Activated T-helper 2 cell treated with anti-CD3 and anti-CD28 coated beads, Interferon-gamma antibody, Interleukin-2, Interleukin-4, amounts not matched to agents 10 μg/mL and 5 μg/mL and 100 μg/mL, durations not matched to agents 14 hours and 24 hours and 36 hours (primary cell): ENCODE measurements at regions of chrX and their contacts with region 1.

Region 1: GRCh38 chrX:74614093-74614909 is at the start of gene RLIM:
- DNase-seq: peak; percentile 90
- H3K4me3 Mint-ChIP-seq: peak within 1 kb of the TSS; percentile 100
- H3K27ac Mint-ChIP-seq: peak within 1 kb of the TSS; percentile 100
- H3K4me1 Mint-ChIP-seq: peaks cover 9% of the 10 kb centered on the region
- H3K27me3 Mint-ChIP-seq: no peaks in the 10 kb centered on the region
- total RNA-seq, gene RLIM: 37.6 and 38.7 TPM in 2 replicates

Region 2: DNA sequence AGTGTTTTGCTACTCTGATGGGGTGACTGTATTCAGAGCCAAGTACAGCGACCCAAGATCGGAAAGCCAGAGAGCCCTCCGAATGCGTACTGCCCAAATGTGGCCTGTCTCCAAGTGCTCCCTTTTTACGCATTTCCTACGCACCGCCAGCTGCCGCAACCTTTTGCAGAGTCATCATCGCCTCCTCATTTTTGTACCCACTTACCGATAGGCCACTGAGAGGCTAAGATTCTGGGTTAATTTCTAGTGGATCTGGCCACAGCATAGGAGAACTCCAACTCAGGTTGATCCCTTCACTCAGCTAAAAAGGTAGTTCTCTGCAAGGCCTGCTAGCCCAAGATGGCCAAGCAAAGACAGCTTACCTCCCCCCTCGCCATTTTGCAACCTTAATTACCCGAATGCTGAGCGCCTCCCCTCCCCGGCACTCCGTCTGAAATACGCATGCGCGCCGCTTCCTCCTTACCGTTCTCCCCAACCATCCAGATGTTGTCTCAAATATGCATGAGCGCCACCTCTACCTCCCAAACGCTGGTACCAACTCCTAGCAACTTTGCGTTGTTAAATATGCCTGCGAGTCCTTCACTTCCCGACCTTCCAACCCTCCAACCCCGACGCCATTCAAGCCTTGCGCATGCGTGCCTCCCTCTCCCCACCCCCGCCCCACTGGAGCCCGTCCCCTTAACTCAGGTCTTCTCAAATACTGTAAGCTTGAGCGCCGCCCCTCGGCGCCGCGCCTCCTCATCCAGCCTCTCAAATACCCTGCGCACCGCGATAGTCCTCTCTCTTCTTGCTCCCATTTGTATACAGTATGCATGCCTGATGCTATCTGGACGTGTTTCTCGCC is 322.1 kb before region 1 on chrX:
- intact Hi-C with region 1: loop called (anchors 1 kb)
- DNase-seq: peak; percentile 68
- H3K4me3 Mint-ChIP-seq: peak overlapping the region; percentile 97
- H3K27ac Mint-ChIP-seq: peak overlapping the region; percentile 100
- H3K4me1 Mint-ChIP-seq: peaks cover 14% of the 10 kb centered on the region
- H3K27me3 Mint-ChIP-seq: no peaks in the 10 kb centered on the region

Region 3: DNA sequence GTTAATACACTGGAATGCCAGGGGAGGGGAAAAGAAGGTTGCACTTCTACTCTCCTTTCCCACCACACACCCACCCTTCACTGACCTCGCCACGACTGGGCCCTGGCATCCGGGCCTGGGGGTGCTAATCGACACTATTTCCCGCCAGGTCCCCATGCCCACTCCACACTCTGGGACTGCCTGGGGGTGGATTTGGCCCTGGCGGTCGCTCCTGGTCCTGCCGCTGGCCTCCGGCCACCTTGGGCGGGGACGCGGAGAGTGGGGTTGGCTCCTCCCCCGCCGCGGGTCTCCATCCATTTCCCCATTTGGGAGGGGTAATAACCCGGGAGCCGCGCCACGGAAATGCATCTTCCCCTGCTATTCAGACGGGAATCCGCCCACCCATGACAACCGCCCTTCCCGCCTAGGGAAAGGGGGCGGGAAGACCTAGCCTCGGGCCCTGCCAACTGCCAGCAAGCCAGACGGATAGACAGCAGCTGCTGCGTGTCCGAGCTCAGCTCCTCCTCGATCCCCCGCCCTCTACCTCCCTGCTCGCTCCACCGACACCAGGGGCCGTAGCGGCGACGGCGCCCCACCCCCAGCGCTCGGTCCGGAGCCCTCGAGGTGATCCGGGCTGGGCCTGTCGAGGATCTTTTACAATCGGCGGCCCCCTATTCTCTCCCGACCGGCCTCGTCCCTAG is 78.0 kb before region 1 on chrX:
- intact Hi-C with region 1: loop called (anchors 5 kb)
- DNase-seq: peak; percentile 9
- H3K4me3 Mint-ChIP-seq: peak overlapping the region; percentile 75
- H3K27ac Mint-ChIP-seq: peak overlapping the region; percentile 82
- H3K4me1 Mint-ChIP-seq: peaks cover 30% of the 10 kb centered on the region
- H3K27me3 Mint-ChIP-seq: no peaks in the 10 kb centered on the region

Region 4: GRCh38 chrX:74980802-74981201 is 366.5 kb after region 1 on chrX:
- intact Hi-C with region 1: no loop called
- DNase-seq: no peak
- H3K4me3 Mint-ChIP-seq: no peak overlapping the region
- H3K27ac Mint-ChIP-seq: no peak overlapping the region
- H3K4me1 Mint-ChIP-seq: no peaks in the 10 kb centered on the region
- H3K27me3 Mint-ChIP-seq: no peaks in the 10 kb centered on the region

Region 5: DNA sequence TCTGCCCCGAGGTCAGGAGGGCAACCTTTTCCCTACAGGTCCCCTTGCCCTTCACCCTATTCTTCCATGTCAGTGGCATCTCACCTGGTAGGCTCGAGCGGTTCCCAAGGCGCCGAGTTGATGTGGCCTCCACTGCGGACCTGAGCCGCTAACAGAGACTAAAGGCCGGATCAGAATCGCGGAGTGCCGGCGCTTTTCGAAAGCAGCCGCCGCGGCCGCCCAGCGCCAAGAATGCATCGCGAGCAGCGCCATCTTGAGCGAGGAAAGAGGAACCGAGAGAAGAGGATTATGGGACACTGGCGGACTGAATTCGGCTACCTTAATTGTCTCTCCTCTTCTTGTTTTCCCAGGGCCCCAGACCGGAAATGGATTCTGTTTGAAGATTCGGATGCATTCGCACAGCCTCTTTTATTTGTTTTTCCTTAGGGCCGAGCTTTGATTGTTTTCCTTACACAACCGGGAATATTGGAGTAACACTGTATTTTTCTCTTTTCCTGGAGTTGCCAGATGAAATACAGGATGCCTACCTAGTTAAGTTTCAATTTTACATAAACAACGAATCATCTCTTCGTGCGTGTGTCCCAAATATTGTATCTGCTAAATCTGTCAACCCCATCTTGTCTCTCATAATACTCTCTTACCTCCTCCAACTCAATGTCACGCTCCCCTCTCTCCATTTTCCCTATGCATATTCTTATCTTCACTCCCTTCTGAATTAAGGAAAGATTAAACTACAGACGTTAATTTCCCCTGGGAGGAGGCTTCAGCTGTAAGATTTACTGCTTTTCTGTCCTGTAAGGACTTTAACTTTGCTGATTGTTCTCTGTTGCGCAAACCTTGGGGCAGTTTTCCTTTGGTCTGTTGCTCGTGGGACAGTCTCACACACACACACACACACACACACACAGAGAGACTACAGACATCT is 542.0 kb after region 1 on chrX and contains the start of gene ABCB7:
- intact Hi-C with region 1: loop called (anchors 5 kb)
- DNase-seq: peak; percentile 56
- H3K4me3 Mint-ChIP-seq: peak within 1 kb of the TSS; percentile 96
- H3K27ac Mint-ChIP-seq: peak within 1 kb of the TSS; percentile 96
- H3K4me1 Mint-ChIP-seq: peaks cover 45% of the 10 kb centered on the region
- H3K27me3 Mint-ChIP-seq: no peaks in the 10 kb centered on the region
- total RNA-seq, gene ABCB7: 53.9 and 54.3 TPM in 2 replicates

Region 6: GRCh38 chrX:76172325-76172893 is 1558.1 kb after region 1 on chrX:
- intact Hi-C with region 1: loop called (anchors 5 kb)
- DNase-seq: no peak
- H3K4me3 Mint-ChIP-seq: peak overlapping the region; percentile 94
- H3K27ac Mint-ChIP-seq: peak overlapping the region; percentile 93
- H3K4me1 Mint-ChIP-seq: peaks cover 35% of the 10 kb centered on the region
- H3K27me3 Mint-ChIP-seq: no peaks in the 10 kb centered on the region